ENCODE measurements at regions of chr2 and their contacts with region 1.

Region 1: GRCh38 chr2:197453161-197453914 is at the start of gene COQ10B:
- DNase-seq: peak; percentile 92 to 99 (median 98)
- ATAC-seq: peak; percentile 85 to 88
- H3K4me3 Mint-ChIP-seq: peak within 1 kb of the TSS; percentile 98 to 100 (median 100)
- H3K27ac Mint-ChIP-seq: peak within 1 kb of the TSS; percentile 100
- H3K4me1 Mint-ChIP-seq: peaks cover 22 to 54% (median 47%) of the 10 kb centered on the region in 4 donors
- H3K27me3 Mint-ChIP-seq: no peaks in the 10 kb centered on the region
- polyA plus RNA-seq, gene COQ10B: 30.0 to 43.4 (median 39.4) TPM

Region 2: GRCh38 chr2:197434541-197435513 is 18.5 kb before region 1 on chr2 and contains the start of gene SF3B1:
- POLR2A ChIA-PET with region 1: interaction called, 187 read pairs
- DNase-seq: peak; percentile 96 to 99 (median 99)
- ATAC-seq: peak; percentile 92 to 94
- H3K4me3 Mint-ChIP-seq: peak within 1 kb of the TSS; percentile 92 to 100 (median 99)
- H3K27ac Mint-ChIP-seq: peak within 1 kb of the TSS; percentile 100
- H3K4me1 Mint-ChIP-seq: peaks cover 32 to 57% (median 54%) of the 10 kb centered on the region in 4 donors
- H3K27me3 Mint-ChIP-seq: no peaks in the 10 kb centered on the region
- polyA plus RNA-seq, gene SF3B1: 120 to 131 (median 120) TPM

Region 3: DNA sequence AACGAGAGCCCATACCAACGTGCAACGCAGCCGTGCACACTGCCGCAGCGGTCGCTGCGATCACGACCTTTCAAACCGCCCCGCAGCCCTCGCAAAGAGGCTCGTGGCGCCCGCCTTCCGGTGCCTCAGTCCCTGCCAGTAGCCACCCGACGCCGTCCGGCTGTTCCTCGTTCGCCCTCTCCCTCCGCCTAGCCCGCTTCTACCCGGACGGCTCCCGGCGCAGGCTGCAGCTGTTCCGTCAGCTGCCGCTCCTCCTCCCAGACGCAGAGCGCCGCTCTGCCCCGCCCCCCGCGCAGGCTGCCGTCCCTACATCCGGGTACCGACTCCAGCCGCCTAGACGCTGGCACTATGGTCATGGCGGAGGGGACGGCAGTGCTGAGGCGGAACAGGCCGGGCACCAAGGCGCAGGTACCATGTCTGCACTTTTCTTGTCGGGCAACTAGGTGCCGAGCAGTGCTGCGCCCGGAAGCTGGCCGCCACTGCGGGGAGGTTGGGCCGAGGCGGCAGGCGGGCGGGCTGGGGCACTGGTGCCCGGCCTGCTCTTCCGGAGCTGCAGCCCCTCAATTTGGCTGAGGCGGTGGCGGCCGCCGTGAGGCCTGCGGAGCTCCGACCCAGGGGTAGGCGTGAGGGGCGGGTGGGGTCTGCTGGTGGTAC is 62.5 kb after region 1 on chr2 and contains the start of gene MOB4:
- POLR2A ChIA-PET with region 1: interaction called, 25 read pairs
- DNase-seq: peak; percentile 87 to 95 (median 92)
- ATAC-seq: peak; percentile 84 to 87
- H3K4me3 Mint-ChIP-seq: peak within 1 kb of the TSS; percentile 80 to 99 (median 94)
- H3K27ac Mint-ChIP-seq: peak within 1 kb of the TSS; percentile 88 to 99 (median 95)
- H3K4me1 Mint-ChIP-seq: peaks cover 17 to 61% (median 35%) of the 10 kb centered on the region in 4 donors
- H3K27me3 Mint-ChIP-seq: no peaks in the 10 kb centered on the region
- polyA plus RNA-seq, gene MOB4: 19.4 to 29.1 (median 23.6) TPM